IMR-90 (cell line): ENCODE measurements at regions of chr9 and their contacts with region 1.

Region 1: DNA sequence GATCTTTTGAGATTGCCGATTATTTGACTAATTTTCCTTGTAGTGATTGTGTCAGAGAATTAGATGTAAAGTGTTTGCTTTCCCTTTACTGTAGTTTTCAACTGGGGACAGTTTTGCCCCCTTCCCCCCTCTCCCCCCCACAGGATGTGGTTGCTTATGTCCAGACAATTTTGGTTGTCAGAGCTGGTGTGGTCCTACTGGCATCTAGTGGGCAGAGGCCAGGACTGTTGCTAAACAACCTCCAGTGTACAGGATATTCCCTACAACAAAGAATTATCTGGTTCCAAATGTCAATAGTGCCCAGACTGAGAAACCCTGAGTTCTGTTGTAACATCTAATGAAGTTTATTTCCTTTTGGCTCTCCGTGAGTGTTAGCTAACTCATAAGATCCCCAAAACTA is 20.0 kb downstream of the TMEFF1 start:
- DNase-seq: peak; percentile 22
- ATAC-seq: peak; percentile 27; the same call in 1 of the 2 replicates
- H3K4me3 ChIP-seq: no peak overlapping the region
- H3K27ac ChIP-seq: no peak overlapping the region
- H3K4me1 ChIP-seq: peaks cover 2% of the 10 kb centered on the region
- H3K27me3 ChIP-seq: no peaks in the 10 kb centered on the region
- CTCF ChIP-seq: 0 out of 2 replicates have a peak, but pooled peaks have one; percentile 31
- POLR2A ChIP-seq: no peak
- RAD21 ChIP-seq: peak; percentile 47

Region 2: DNA sequence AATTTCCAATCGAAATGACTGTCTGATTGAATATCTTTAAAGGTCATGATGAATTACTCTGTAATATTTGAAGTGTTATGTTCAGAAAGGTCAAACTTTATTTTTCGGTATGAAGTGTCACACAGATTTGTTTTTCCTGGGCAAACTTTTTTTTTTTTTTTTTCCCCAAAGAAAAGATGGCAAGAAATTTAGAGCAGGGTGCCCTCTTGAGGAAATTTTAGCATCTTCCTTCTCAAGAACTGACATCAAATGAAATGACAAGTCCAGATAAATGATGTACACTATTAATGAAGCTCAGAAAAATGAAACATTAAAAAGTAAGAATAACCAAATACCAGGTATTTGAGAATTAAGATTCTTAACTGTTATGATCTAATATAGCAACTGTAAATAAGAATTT is 270.3 kb before region 1 on chr9:
- CTCF ChIA-PET with region 1: no interaction called
- POLR2A ChIA-PET with region 1: no interaction called
- dilution Hi-C with region 1: no loop called
- in situ Hi-C with region 1: no loop called
- intact Hi-C with region 1: loop called (anchors 5 kb)
- DNase-seq: peak; percentile 53
- ATAC-seq: 0 out of 2 replicates have a peak, but pooled peaks have one; percentile 27
- H3K4me3 ChIP-seq: no peak overlapping the region
- H3K27ac ChIP-seq: no peak overlapping the region
- H3K4me1 ChIP-seq: peaks cover 2% of the 10 kb centered on the region
- H3K27me3 ChIP-seq: no peaks in the 10 kb centered on the region
- CTCF ChIP-seq: peak; percentile 61
- POLR2A ChIP-seq: no peak
- RAD21 ChIP-seq: peak; percentile 64

Region 3: DNA sequence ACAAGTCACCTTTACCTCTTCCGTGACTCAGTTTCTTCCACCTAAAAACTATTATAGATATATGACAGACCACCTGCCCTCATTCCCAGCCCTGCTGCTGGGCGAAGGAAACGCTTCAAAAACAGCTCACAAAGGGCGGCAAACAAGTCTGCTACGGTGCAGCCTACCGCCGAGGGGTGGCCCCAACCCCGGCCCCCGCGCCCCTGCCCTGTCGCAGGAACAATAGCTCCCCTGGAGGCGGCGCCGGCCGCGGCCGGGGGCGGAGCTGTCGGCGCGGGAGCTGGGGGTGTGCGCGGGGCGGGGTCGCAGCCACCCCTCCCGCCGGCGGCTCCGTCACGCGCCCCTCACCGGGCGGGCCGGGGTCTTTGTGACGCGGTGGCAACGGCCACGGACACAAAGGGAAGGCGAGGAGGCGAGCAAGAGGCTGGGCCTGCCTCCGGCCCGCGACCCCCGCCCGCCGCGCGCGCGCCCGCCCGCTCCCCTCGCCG is 20.1 kb before region 1 on chr9 and contains the start of gene TMEFF1:
- CTCF ChIA-PET with region 1: interaction called, 6 read pairs
- POLR2A ChIA-PET with region 1: interaction called, 10 read pairs
- dilution Hi-C with region 1: no loop called
- in situ Hi-C with region 1: no loop called
- intact Hi-C with region 1: no loop called
- DNase-seq: peak; percentile 26
- ATAC-seq: peak; percentile 85
- H3K4me3 ChIP-seq: peak within 1 kb of the TSS; percentile 90
- H3K27ac ChIP-seq: peak within 1 kb of the TSS; percentile 11; the same call in 1 of the 2 replicates
- H3K4me1 ChIP-seq: no peaks in the 10 kb centered on the region
- H3K27me3 ChIP-seq: no peaks in the 10 kb centered on the region
- CTCF ChIP-seq: peak; percentile 29
- POLR2A ChIP-seq: no peak
- RAD21 ChIP-seq: no peak
- total RNA-seq, gene TMEFF1: 0.90 and 1.9 TPM in 2 replicates